ENCODE measurements at regions of chr22 and their contacts with region 1.

Region 1: DNA sequence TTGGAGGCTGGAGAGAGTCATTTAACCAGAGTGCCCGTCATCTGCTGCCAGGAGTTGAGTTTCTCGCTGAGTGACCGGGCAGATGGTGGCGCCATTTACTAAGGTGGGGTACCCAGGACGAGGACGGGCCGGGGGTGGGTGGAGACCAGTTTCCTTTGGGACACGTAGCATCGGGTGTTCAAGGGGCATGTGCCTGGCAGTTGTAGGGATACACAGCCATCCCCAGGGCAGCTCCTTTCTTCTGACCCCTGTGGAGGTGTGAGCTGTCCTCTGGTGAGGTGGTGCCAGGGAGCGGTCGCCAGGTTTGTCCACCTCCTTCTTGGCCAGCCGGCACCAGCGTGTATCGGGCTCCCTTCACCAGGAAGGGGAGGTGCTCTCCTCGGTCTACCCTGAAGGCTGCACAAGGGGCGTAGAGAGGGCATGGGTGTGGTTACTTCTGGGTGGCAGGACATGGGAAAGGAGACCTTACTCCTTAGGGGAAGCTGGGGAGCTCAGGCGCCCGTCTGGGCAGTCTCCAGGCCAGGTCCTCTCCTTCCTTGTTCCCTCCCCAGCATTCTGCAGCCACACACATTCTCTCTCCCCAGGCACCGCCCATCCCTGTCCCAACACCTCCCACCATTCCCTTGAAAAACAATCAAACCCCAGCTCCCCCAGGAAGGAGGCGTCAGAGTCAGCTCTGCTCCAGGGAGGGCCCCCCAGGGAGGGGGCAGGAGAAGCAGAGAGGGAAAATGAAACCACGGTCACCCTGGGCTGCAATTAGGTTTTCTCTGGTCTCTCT is 10.3 kb upstream of the MB start:
- DNase-seq: peak; percentile 66 to 94
- ATAC-seq: peak; percentile 77 to 84
- H3K4me3 ChIP-seq: peak overlapping the region; percentile 44
- H3K27ac ChIP-seq: peak overlapping the region; percentile 89 to 99
- H3K4me1 ChIP-seq: peaks cover 46% of the 10 kb centered on the region
- CTCF ChIP-seq: peak; percentile 68
- EP300 ChIP-seq: no peak
- POLR2A ChIP-seq: no peak; the same call in none of the 2 replicates
- RAD21 ChIP-seq: peak; percentile 92 to 93

Region 2: DNA sequence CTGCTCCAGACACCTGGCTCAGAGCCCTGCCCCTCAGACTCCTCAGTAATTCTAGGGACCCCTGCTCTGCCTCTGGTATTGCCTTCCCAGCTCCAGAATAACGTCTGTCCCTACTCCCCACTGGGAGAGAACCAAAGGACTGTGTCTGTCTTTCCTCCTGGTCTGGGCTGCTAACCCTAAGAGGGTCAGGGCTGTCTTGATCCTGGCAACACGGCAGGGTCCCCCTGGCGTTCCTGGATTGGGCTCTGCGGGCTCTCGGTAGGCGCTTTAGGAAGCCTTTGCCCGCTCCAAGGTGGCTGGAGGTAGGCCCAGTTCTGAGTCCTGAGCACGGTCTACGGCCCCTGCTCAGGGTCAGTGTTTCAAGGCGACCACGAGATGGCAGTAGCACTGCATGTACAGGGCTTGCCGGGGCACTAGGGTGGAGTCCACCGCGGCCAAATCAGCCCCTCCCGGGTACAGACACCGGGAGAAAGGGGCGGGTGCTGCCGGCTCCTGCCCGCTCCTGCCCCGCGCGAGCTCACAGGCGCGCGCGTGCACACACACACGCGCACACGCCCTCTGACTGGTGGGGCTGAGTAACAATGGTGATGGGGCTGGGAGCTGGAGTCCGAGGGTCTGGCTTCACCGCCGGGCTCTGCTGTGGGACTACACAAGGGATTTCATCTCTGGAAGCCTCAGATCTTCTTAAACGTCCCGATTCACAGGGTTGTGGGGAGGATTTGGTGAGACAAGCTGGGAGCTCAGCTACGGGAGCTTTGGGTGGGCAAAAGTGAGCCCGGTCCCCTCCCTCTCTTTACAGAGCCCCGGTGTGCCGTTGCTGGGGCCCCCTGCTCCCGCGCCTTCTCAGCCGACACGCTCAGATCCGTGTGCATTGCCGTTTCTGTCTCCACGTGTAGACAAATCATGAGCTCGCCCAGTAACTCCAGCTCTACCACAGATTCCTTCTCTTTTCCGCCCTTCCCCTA is 276.6 kb before region 1 on chr22:
- CTCF ChIA-PET with region 1: interaction called, 11 read pairs
- POLR2A ChIA-PET with region 1: no interaction called
- DNase-seq: peak; percentile 85 to 91
- ATAC-seq: peak; percentile 81 to 93
- H3K4me3 ChIP-seq: peak overlapping the region; percentile 49
- H3K27ac ChIP-seq: peak overlapping the region; percentile 95 to 98
- H3K4me1 ChIP-seq: peaks cover 29% of the 10 kb centered on the region
- CTCF ChIP-seq: peak; percentile 74
- EP300 ChIP-seq: no peak
- POLR2A ChIP-seq: peak; percentile 57
- RAD21 ChIP-seq: peak; percentile 91 to 95

Region 3: DNA sequence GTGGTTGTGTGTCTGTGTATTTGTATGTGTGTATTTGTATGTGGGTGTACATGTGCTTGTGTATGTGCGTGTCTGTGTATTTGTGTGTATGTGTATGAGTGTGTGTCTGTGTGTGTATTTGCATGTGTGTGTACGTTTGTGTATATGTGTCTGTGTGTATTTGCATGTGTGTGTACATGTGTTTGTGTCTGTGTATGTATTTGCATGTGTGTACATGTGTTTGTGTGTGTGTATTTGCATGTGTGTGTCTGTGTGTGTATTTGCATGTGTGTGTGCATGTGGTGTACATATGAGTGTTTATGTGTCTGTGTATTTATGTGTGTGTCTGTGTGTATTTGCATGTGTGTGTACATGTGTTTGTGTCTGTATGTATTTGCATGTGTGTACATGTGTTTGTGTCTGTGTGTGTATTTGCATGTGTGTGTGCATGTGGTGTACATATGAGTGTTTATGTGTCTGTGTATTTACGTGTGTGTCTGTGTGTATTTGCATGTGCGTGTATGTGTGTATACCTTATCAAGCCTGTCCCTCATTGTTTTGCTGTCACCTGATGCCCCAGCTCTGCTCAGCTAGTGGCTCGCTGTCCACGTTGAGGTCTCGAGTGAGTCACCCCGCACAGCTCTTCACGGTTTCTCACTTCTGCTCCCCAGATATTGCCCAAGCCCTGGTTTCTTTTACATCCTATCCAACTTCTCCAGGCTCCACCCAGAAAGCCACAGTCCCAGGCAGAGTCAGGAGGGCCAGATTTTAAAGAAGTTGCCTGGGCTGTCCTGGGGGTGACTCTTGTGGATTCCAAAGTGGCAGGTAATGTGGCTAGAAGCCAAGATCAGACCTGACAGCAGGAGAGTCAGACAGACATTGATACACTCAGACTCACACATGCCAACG is 25.5 kb before region 1 on chr22:
- CTCF ChIA-PET with region 1: no interaction called
- POLR2A ChIA-PET with region 1: no interaction called
- DNase-seq: peak in 1 of 2 experiments; percentile 43
- ATAC-seq: peak; percentile 61 to 86
- H3K4me3 ChIP-seq: no peak overlapping the region
- H3K27ac ChIP-seq: peak overlapping the region in 1 of 2 experiments; percentile 63; a peak in 3 of 6 replicates
- H3K4me1 ChIP-seq: peaks cover 17% of the 10 kb centered on the region
- CTCF ChIP-seq: no peak
- EP300 ChIP-seq: no peak
- POLR2A ChIP-seq: no peak
- RAD21 ChIP-seq: no peak

Region 4: GRCh38 chr22:35643991-35644390 is 16.5 kb after region 1 on chr22:
- CTCF ChIA-PET with region 1: interaction called, 12 read pairs
- POLR2A ChIA-PET with region 1: interaction called, 3 read pairs
- DNase-seq: no peak
- ATAC-seq: no peak
- H3K4me3 ChIP-seq: no peak overlapping the region
- H3K27ac ChIP-seq: no peak overlapping the region
- H3K4me1 ChIP-seq: peaks cover 9% of the 10 kb centered on the region
- CTCF ChIP-seq: no peak
- EP300 ChIP-seq: no peak
- POLR2A ChIP-seq: no peak
- RAD21 ChIP-seq: no peak

Region 5: GRCh38 chr22:35733791-35734516 is 106.5 kb after region 1 on chr22:
- CTCF ChIA-PET with region 1: interaction called, 10 read pairs
- POLR2A ChIA-PET with region 1: no interaction called
- DNase-seq: no peak
- ATAC-seq: 0 out of 6 replicates have a peak, but pooled peaks of 1 of the 2 experiments have one; percentile 26
- H3K4me3 ChIP-seq: no peak overlapping the region
- H3K27ac ChIP-seq: no peak overlapping the region
- H3K4me1 ChIP-seq: no peaks in the 10 kb centered on the region
- CTCF ChIP-seq: no peak
- EP300 ChIP-seq: no peak
- POLR2A ChIP-seq: no peak
- RAD21 ChIP-seq: no peak

Region 6: GRCh38 chr22:35840302-35840739 is 212.9 kb after region 1 on chr22:
- CTCF ChIA-PET with region 1: interaction called, 20 read pairs
- POLR2A ChIA-PET with region 1: interaction called, 6 read pairs
- DNase-seq: peak; percentile 62 to 97
- ATAC-seq: peak; percentile 84 to 88
- H3K4me3 ChIP-seq: peak overlapping the region; percentile 69
- H3K27ac ChIP-seq: peak overlapping the region; percentile 79 to 90
- H3K4me1 ChIP-seq: peaks cover 52% of the 10 kb centered on the region
- CTCF ChIP-seq: no peak
- EP300 ChIP-seq: no peak
- POLR2A ChIP-seq: no peak
- RAD21 ChIP-seq: 0 out of 5 replicates have a peak, but pooled peaks of 1 of the 2 experiments have one; percentile 16

Region 7: DNA sequence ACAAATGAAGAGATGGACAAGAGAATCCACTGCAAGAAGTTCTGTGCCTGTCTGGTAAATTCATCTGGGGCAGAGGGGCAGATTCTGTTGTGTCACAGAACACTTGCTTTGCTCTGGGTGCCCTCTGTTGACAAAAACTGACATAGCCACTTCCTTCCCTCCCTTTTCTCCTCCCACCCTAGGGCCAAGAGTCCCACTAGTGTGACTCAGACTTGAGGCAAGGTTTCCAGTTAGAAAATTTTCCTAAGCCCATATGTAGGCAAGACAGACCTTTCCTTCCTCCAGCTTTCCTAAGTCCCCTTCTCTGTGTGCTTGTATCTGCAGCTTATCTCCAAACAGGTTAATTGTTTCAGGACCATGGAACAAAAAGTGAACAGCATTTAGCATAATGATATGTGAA is 294.3 kb after region 1 on chr22:
- CTCF ChIA-PET with region 1: interaction called, 15 read pairs
- POLR2A ChIA-PET with region 1: interaction called, 3 read pairs
- DNase-seq: peak; percentile 31 to 83
- ATAC-seq: peak; percentile 98 to 99
- H3K4me3 ChIP-seq: no peak overlapping the region
- H3K27ac ChIP-seq: peak overlapping the region; percentile 66 to 72; a peak in 5 of 6 replicates
- H3K4me1 ChIP-seq: peaks cover 25% of the 10 kb centered on the region
- CTCF ChIP-seq: peak; percentile 75
- EP300 ChIP-seq: no peak
- POLR2A ChIP-seq: no peak
- RAD21 ChIP-seq: peak; percentile 86 to 87